ENCODE measurements at regions of chr12 and their contacts with region 1.

Region 1: GRCh38 chr12:43758728-43759563 is at the starts of genes IRAK4 and PUS7L:
- DNase-seq: peak; percentile 96
- H3K4me3 Mint-ChIP-seq: peak within 1 kb of the TSS; percentile 97
- H3K27ac Mint-ChIP-seq: peak within 1 kb of the TSS; percentile 99
- H3K4me1 Mint-ChIP-seq: peaks cover 64% of the 10 kb centered on the region
- H3K27me3 Mint-ChIP-seq: no peaks in the 10 kb centered on the region
- total RNA-seq, gene IRAK4: 44.3 to 46.0 TPM
- total RNA-seq, gene PUS7L: 17.1 to 18.8 TPM

Region 2: DNA sequence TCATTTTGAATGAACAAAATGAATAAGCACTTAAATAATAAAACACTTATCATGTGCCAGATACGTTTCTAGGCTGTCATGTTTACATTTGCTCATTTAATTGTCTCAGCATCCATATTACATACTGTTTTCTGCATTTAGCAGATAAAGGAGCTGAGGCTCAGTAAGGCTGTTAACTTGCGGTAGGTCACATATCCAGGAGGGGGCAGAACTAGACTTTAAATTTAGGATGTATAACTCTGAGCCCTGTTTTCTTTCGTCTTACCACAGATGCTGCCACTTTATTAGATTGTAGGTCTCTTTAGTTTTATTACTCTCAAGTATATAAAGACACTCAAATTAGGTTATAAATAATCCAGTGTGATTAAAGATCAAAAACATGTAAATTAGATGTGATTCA is 17.6 kb after region 1 on chr12:
- CTCF ChIA-PET with region 1: interaction called, 8 read pairs
- POLR2A ChIA-PET with region 1: interaction called, 10 read pairs
- DNase-seq: no peak
- H3K4me3 Mint-ChIP-seq: no peak overlapping the region
- H3K27ac Mint-ChIP-seq: no peak overlapping the region
- H3K4me1 Mint-ChIP-seq: peaks cover 1% of the 10 kb centered on the region
- H3K27me3 Mint-ChIP-seq: no peaks in the 10 kb centered on the region

Region 3: DNA sequence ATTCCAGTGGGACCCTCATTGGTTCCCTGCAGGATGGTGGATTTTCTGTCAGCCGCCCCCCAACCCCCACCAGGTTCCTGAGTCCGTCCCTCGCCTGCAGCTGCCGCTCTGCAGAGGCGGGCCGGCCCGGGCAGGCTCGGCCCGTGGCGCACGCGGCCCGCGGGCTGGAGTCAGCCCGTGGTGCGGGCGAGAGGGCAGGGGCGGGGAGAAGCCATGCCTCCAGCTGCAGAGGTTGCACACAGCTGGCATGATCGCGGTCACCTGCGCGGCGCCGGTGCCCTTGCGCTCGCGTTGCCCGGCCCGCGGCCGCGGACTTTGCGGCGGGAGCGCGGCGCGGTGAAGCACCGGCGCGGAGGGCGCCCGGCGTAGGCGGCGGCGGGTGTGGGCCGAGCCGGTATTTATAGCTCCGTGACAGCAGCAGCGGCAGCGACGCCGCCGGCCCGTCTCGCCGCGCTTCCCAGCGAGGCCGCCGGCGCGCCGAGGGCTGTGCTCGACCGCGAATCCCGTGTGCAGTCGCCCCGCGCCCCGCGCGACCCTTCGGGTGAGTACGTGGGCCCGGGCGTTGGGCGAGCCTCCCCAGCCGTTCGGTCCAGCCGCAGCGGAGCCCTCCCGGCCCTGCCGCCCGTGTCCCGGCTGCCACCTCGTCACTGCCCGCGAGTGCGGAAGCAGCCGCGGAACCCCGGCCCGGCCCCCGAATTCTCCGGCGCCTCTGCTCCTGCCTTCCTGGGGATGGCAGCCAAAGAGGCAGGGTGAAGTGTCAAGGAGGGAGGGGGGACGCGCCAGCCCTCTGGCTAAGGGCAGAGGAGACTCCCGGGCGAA is 76.9 kb after region 1 on chr12 and contains the start of gene TMEM117:
- CTCF ChIA-PET with region 1: no interaction called
- POLR2A ChIA-PET with region 1: interaction called, 13 read pairs
- DNase-seq: peak; percentile 61
- H3K4me3 Mint-ChIP-seq: peak within 1 kb of the TSS; percentile 84
- H3K27ac Mint-ChIP-seq: peak within 1 kb of the TSS; percentile 57
- H3K4me1 Mint-ChIP-seq: peaks cover 22% of the 10 kb centered on the region
- H3K27me3 Mint-ChIP-seq: peaks cover 6% of the 10 kb centered on the region
- total RNA-seq, gene TMEM117: 1.6 to 1.7 TPM

Region 4: GRCh38 chr12:43858096-43858495 is 99.2 kb after region 1 on chr12:
- CTCF ChIA-PET with region 1: no interaction called
- POLR2A ChIA-PET with region 1: no interaction called
- DNase-seq: no peak
- H3K4me3 Mint-ChIP-seq: no peak overlapping the region
- H3K27ac Mint-ChIP-seq: no peak overlapping the region
- H3K4me1 Mint-ChIP-seq: peaks cover 2% of the 10 kb centered on the region
- H3K27me3 Mint-ChIP-seq: no peaks in the 10 kb centered on the region